WTC11 (cell line): ENCODE measurements at regions of chr16 and their contacts with region 1.

Region 1: DNA sequence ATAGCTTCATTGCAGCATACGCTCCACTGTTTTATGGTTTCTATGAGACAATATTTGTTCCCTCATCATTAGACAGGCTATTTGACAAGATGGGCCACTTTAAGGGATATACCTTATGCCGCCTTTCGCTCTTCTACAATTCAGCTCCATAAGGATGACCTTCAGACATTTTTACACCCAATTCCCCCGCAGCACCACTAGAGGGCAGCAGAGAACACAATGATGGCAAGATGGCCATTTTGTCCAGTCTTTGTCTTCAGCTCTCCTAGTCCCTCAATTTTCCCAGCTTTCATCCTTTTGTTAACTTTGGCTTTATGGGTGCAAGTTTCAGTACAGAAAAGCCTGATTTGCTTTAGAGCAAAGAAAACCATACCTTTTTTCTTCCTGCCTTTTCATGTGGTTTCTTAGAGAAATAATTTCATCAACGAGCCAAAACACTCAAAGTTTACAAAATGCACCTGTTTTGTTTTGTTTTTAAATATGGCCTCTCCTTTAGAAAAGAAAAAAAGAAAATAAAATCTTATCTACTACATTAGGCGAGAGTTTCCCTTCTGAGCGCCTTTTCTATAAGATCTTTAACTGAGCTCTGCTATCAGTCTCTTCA is 355.3 kb downstream of the TOX3 start:
- DNase-seq: peak; percentile 81
- ATAC-seq: peak; percentile 46
- H3K4me3 Mint-ChIP-seq: no peak overlapping the region
- H3K27ac Mint-ChIP-seq: no peak overlapping the region
- H3K4me1 Mint-ChIP-seq: peaks cover 17% of the 10 kb centered on the region
- H3K27me3 Mint-ChIP-seq: no peaks in the 10 kb centered on the region
- CTCF ChIP-seq: peak; percentile 93

Region 2: GRCh38 chr16:52171481-52171880 is 20.2 kb before region 1 on chr16:
- CTCF ChIA-PET with region 1: interaction called, 14 read pairs
- POLR2A ChIA-PET with region 1: no interaction called
- DNase-seq: no peak
- ATAC-seq: peak; percentile 36; the same call in 1 of the 2 replicates
- H3K4me3 Mint-ChIP-seq: no peak overlapping the region
- H3K27ac Mint-ChIP-seq: no peak overlapping the region
- H3K4me1 Mint-ChIP-seq: peaks cover 12% of the 10 kb centered on the region
- H3K27me3 Mint-ChIP-seq: no peaks in the 10 kb centered on the region
- CTCF ChIP-seq: no peak

Region 3: DNA sequence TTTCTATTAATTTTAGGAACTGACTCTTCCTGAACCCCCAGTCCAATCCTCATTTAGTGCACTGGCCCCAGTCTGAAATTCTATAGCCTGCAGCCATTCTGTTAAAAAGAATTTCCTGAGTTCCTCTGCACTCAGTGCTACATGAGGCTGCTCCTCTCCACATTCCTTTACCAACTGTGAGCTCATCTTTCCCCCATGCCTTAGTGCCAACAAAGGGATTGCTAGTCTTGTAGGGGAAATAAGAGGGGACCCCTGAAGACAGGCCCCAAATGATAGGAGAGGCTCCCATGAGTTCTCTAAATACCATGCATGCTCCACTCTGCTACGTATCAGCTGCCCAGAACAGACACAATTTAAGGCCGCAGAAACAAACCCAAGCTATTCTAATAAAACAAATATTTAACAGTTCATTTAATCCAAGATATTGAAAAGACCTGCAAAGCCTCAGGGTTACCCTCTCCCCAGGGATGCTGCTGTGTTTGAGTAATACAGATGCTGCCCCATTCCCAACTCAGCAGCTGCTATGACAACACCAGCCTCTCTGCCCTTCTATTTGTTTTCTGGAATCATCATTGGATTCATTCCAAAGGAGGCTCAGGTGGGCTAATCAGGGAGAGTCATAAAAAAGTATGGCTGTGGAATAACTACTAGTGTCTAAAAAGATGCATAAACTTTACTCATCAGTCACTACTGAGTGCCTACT is 126.8 kb after region 1 on chr16:
- CTCF ChIA-PET with region 1: no interaction called
- POLR2A ChIA-PET with region 1: no interaction called
- DNase-seq: no peak
- ATAC-seq: peak; percentile 72
- H3K4me3 Mint-ChIP-seq: no peak overlapping the region
- H3K27ac Mint-ChIP-seq: no peak overlapping the region
- H3K4me1 Mint-ChIP-seq: peaks cover 7% of the 10 kb centered on the region
- H3K27me3 Mint-ChIP-seq: peaks cover 3% of the 10 kb centered on the region; the same call in 1 of the 2 replicates
- CTCF ChIP-seq: no peak

Region 4: GRCh38 chr16:52547004-52547833 is 355.6 kb after region 1 on chr16 and contains the start of gene TOX3:
- CTCF ChIA-PET with region 1: interaction called, 27 read pairs
- POLR2A ChIA-PET with region 1: no interaction called
- DNase-seq: peak; percentile 67
- ATAC-seq: peak; percentile 44
- H3K4me3 Mint-ChIP-seq: peak within 1 kb of the TSS; percentile 91
- H3K27ac Mint-ChIP-seq: no peak within 1 kb of the TSS; the same call in 1 of the 2 replicates
- H3K4me1 Mint-ChIP-seq: peaks cover 51% of the 10 kb centered on the region
- H3K27me3 Mint-ChIP-seq: peaks cover 49% of the 10 kb centered on the region
- CTCF ChIP-seq: no peak
- total RNA-seq, gene TOX3: 17.6 to 20.2 TPM (median 19.3 TPM) in 3 replicates

Region 5: DNA sequence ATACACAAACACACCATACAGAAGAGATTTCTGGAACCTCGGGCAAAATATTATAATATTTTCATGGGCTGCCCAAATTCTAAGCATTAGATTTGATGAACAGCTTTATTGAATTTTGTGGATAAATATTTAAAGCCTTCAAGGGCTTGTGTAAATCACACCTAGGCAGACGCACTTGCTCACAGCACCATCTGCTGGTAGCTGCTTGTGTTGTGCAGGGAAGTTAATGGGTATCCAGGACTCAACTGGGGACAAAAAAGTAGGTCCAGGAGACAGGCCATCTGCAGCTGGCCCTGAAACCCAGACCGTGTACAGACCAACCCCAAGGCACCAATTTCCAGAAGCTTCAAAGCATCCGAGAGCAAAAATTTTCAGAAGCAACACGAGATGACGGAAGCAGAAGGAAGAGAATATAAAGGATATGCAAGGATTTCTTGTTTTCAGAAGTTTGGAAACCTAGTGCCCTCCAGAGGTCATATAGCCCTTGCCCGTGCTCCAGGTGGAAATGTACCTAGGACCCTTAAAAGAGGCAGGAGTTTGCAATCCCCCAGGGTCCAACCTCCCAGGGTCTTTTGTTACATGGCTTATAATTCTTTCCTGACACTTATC is 721.0 kb after region 1 on chr16:
- CTCF ChIA-PET with region 1: interaction called, 19 read pairs
- POLR2A ChIA-PET with region 1: no interaction called
- DNase-seq: peak; percentile 83
- ATAC-seq: peak; percentile 93
- H3K4me3 Mint-ChIP-seq: no peak overlapping the region
- H3K27ac Mint-ChIP-seq: no peak overlapping the region
- H3K4me1 Mint-ChIP-seq: peaks cover 6% of the 10 kb centered on the region
- H3K27me3 Mint-ChIP-seq: no peaks in the 10 kb centered on the region
- CTCF ChIP-seq: peak; percentile 65